A549 (cell line): ENCODE measurements at regions of chr11 and their contacts with region 1.

Region 1: GRCh38 chr11:67317205-67317887 is 14.0 kb downstream of the SSH3 start:
- DNase-seq: peak; percentile 94 to 99
- ATAC-seq: peak; percentile 88 to 90
- H3K4me3 ChIP-seq: peak overlapping the region; percentile 69
- H3K27ac ChIP-seq: peak overlapping the region; percentile 91 to 95
- H3K4me1 ChIP-seq: peaks cover 12% of the 10 kb centered on the region
- CTCF ChIP-seq: peak; percentile 97
- EP300 ChIP-seq: no peak
- POLR2A ChIP-seq: peak; percentile 88
- RAD21 ChIP-seq: peak; percentile 92 to 98

Region 2: GRCh38 chr11:66787912-66788758 is 529.2 kb before region 1 on chr11:
- CTCF ChIA-PET with region 1: no interaction called
- POLR2A ChIA-PET with region 1: no interaction called
- DNase-seq: no peak
- ATAC-seq: no peak
- H3K4me3 ChIP-seq: no peak overlapping the region
- H3K27ac ChIP-seq: no peak overlapping the region
- H3K4me1 ChIP-seq: peaks cover 23% of the 10 kb centered on the region
- CTCF ChIP-seq: no peak
- EP300 ChIP-seq: no peak
- POLR2A ChIP-seq: no peak
- RAD21 ChIP-seq: no peak

Region 3: GRCh38 chr11:67082035-67082791 is 235.1 kb before region 1 on chr11:
- CTCF ChIA-PET with region 1: interaction called, 15 read pairs
- POLR2A ChIA-PET with region 1: no interaction called
- DNase-seq: no peak
- ATAC-seq: no peak
- H3K4me3 ChIP-seq: no peak overlapping the region
- H3K27ac ChIP-seq: peak overlapping the region in 1 of 2 experiments; percentile 56; a peak in 3 of 6 replicates
- H3K4me1 ChIP-seq: peaks cover 32% of the 10 kb centered on the region
- CTCF ChIP-seq: no peak
- EP300 ChIP-seq: no peak
- POLR2A ChIP-seq: no peak
- RAD21 ChIP-seq: no peak

Region 4: GRCh38 chr11:67265633-67266423 is 51.5 kb before region 1 on chr11:
- CTCF ChIA-PET with region 1: interaction called, 178 read pairs
- POLR2A ChIA-PET with region 1: interaction called, 21 read pairs
- DNase-seq: peak; percentile 55 to 76
- ATAC-seq: peak; percentile 60 to 69
- H3K4me3 ChIP-seq: peak overlapping the region; percentile 89; the same call in 2 of the 3 replicates
- H3K27ac ChIP-seq: peak overlapping the region; percentile 92 to 100; a peak in 5 of 6 replicates
- H3K4me1 ChIP-seq: peaks cover 40% of the 10 kb centered on the region
- CTCF ChIP-seq: peak; percentile 79
- EP300 ChIP-seq: no peak
- POLR2A ChIP-seq: no peak
- RAD21 ChIP-seq: peak; percentile 51 to 52; a peak in 3 of 5 replicates

Region 5: GRCh38 chr11:67288452-67289225 is 28.7 kb before region 1 on chr11:
- CTCF ChIA-PET with region 1: interaction called, 16 read pairs
- POLR2A ChIA-PET with region 1: interaction called, 5 read pairs
- DNase-seq: peak; percentile 83 to 89
- ATAC-seq: peak; percentile 72 to 82
- H3K4me3 ChIP-seq: peak overlapping the region; percentile 65
- H3K27ac ChIP-seq: peak overlapping the region; percentile 95 to 98
- H3K4me1 ChIP-seq: peaks cover 19% of the 10 kb centered on the region
- CTCF ChIP-seq: peak; percentile 43
- EP300 ChIP-seq: no peak
- POLR2A ChIP-seq: peak; percentile 80
- RAD21 ChIP-seq: peak; percentile 14 to 30; a peak in 3 of 5 replicates

Region 6: DNA sequence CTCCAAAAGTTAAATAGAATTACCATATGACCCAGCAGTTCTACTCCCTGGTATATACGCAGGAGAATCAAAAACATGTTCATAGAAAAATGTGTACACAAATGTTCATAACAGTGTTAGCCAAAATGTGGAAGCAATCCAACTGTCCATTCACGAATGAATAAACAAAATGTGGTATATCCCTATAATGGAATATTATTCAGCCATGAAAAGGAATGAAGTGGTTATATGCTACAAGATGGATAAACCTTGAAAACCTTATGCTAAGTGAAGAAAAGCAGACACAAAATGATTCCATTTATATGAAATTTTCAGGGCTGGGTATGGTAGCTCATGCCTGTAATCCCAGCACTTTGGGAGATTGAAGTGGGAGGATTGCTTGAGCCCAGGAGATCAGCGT is 19.9 kb after region 1 on chr11:
- CTCF ChIA-PET with region 1: interaction called, 28 read pairs
- POLR2A ChIA-PET with region 1: interaction called, 4 read pairs
- DNase-seq: no peak
- ATAC-seq: no peak
- H3K4me3 ChIP-seq: no peak overlapping the region
- H3K27ac ChIP-seq: no peak overlapping the region
- H3K4me1 ChIP-seq: no peaks in the 10 kb centered on the region
- CTCF ChIP-seq: no peak
- EP300 ChIP-seq: no peak
- POLR2A ChIP-seq: no peak
- RAD21 ChIP-seq: no peak

Region 7: GRCh38 chr11:67382276-67383136 is 65.2 kb after region 1 on chr11:
- CTCF ChIA-PET with region 1: interaction called, 81 read pairs
- POLR2A ChIA-PET with region 1: no interaction called
- DNase-seq: peak; percentile 74 to 83
- ATAC-seq: peak; percentile 63 to 65
- H3K4me3 ChIP-seq: no peak overlapping the region
- H3K27ac ChIP-seq: peak overlapping the region; percentile 95 to 100
- H3K4me1 ChIP-seq: peaks cover 82% of the 10 kb centered on the region
- CTCF ChIP-seq: peak; percentile 98
- EP300 ChIP-seq: no peak
- POLR2A ChIP-seq: no peak
- RAD21 ChIP-seq: peak; percentile 99 to 100